MCF 10A (cell line): ENCODE measurements at regions of chr10 and their contacts with region 1.

Region 1: DNA sequence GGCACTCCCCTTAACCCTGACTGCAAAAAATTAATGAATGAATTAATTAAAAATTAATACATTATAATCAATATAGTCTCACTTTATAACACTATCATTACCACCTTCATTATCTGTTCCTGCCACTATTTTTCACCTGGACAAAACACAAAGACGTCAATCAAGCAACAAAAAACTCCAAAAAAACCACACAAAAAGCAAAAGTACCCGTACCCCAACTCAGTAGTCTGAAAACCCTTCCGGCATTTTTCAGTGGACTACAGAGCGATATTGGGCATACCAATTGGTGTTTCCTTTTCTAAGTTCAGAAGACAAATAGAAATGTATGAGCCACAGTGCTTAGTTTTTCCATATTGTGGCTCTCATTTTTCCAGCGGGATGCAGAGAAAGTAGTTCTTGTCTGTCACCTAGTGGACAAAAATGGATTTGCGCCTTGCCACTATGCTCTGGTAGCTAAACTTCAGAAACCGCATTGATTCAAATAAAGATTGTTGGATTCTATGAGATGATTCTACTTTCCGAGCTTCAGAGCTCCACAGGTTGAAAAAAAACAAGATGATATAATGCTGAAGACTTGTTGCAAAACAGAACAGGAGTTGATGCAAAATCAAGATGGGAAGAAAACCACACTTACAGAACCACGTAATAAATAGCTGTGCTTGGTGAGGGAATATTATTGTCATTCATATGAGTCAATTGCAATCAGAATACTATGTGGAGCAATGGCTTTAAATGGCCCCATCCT is 50.6 kb upstream of the ITGB1 start:
- DNase-seq: peak; percentile 84
- H3K4me3 Mint-ChIP-seq: peak overlapping the region; percentile 35
- H3K27ac Mint-ChIP-seq: peak overlapping the region; percentile 29
- H3K4me1 Mint-ChIP-seq: peaks cover 33% of the 10 kb centered on the region
- H3K27me3 Mint-ChIP-seq: no peaks in the 10 kb centered on the region
- CTCF ChIP-seq: peak; percentile 98

Region 2: DNA sequence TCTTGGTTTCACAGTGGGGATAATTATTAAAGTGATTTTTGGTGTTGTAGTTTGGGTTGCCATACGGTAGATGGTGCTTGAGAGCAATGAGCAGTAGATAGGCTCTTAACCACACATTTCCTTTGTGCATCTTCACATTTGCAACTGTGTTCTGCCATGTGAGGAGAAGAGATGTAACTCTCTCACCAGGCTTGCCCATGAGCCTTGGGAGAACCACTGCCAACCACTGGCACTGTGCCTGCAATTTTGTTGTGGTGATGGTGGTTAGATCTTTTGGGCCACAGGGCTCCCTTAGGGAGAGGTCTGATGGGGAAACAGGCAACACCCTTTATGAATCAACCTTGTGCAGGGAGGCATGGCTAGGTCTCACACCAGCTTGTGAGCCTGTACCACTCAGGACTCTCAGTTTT is 358.4 kb before region 1 on chr10:
- CTCF ChIA-PET with region 1: no interaction called
- POLR2A ChIA-PET with region 1: no interaction called
- intact Hi-C with region 1: loop called (anchors 5 kb)
- DNase-seq: peak; percentile 22
- H3K4me3 Mint-ChIP-seq: no peak overlapping the region
- H3K27ac Mint-ChIP-seq: no peak overlapping the region
- H3K4me1 Mint-ChIP-seq: no peaks in the 10 kb centered on the region
- H3K27me3 Mint-ChIP-seq: no peaks in the 10 kb centered on the region
- CTCF ChIP-seq: no peak

Region 3: GRCh38 chr10:32893431-32893830 is 115.2 kb before region 1 on chr10:
- CTCF ChIA-PET with region 1: interaction called, 3 read pairs
- POLR2A ChIA-PET with region 1: interaction called, 4 read pairs
- intact Hi-C with region 1: loop called (anchors 5 kb)
- DNase-seq: peak; percentile 14
- H3K4me3 Mint-ChIP-seq: no peak overlapping the region
- H3K27ac Mint-ChIP-seq: no peak overlapping the region
- H3K4me1 Mint-ChIP-seq: peaks cover 5% of the 10 kb centered on the region
- H3K27me3 Mint-ChIP-seq: no peaks in the 10 kb centered on the region
- CTCF ChIP-seq: no peak

Region 4: DNA sequence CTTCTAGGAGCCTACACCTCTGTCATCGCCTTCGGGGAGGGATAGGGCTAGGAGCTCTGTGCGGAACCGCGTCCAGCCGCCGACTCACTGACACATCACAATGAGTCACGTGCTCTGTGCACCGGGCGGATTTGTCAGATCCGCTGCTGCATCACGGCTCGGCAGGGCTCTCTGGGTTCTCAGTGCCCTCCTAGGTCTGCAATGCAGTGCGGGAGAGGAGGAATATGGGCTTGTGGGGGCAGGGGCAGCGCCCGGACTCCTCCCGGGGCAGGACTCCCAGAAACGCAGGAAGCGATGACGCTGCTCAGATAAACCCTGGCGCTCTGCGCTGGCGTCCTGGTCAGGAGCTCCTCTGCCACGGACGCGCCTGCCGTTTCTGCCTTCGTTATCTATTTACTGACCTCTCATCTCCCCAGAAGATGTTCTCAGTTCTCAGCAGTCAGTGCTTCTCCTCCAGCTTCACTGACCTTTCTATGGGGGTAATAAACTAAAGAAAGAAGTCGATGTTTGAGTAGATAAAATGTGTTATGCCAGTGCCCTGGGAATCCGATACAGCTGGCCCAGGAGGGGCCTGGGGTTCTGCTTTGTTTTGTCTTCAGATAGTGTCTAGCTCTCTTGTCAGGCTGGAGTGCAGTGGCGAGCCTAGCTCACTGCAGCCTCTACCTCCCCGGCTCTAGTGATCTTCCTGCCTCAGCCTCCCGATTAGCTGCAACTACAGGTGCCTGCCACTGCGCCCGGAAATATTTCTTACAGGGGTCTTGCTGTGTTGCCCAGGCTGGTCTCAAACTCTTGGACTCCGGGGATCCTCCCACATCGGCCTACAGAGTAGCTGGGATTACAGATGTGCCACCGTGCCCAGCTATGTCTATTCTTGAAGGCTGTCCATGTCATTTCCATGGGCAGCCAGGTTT is 27.9 kb before region 1 on chr10:
- CTCF ChIA-PET with region 1: interaction called, 8 read pairs
- POLR2A ChIA-PET with region 1: interaction called, 335 read pairs
- intact Hi-C with region 1: loop called (anchors 1 kb)
- DNase-seq: peak; percentile 99
- H3K4me3 Mint-ChIP-seq: peak overlapping the region; percentile 92
- H3K27ac Mint-ChIP-seq: peak overlapping the region; percentile 99
- H3K4me1 Mint-ChIP-seq: peaks cover 34% of the 10 kb centered on the region
- H3K27me3 Mint-ChIP-seq: no peaks in the 10 kb centered on the region
- CTCF ChIP-seq: no peak

Region 5: DNA sequence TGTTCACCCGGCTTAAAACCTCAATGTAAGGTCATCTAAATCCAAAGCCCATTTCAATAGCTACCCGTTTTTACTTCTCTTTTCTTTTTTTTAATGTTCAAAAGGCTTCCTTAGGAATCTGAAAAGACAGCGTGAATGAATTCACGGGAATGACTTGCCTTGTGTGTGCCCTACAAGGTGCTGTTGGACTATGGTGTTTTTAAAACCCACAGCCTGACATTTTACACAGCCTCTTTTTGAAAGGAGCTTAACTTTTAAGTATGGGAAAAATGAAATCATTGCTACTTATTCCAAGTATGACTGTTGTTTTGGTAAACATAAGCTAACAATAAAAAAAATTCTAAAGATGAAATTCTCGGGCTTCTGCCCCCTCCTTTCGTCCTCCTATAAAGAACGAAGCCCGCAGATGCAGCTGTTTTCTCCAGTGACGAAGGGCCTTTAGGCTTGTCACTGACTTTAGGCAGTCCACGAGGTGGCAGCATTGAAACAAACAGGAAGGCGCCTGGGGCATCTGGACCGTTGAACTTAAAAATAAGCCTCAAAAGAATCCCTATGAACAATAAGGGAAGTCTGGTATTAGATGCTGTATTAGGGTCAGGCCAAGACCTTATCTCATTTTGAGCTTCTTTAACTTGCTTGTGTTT is 184.5 kb after region 1 on chr10:
- CTCF ChIA-PET with region 1: interaction called, 3 read pairs
- POLR2A ChIA-PET with region 1: interaction called, 3 read pairs
- intact Hi-C with region 1: loop called (anchors 1 kb)
- DNase-seq: peak; percentile 92
- H3K4me3 Mint-ChIP-seq: peak overlapping the region; percentile 47
- H3K27ac Mint-ChIP-seq: peak overlapping the region; percentile 52
- H3K4me1 Mint-ChIP-seq: peaks cover 20% of the 10 kb centered on the region
- H3K27me3 Mint-ChIP-seq: no peaks in the 10 kb centered on the region
- CTCF ChIP-seq: peak; percentile 75